Posterior vena cava (tissue), 2 donors: ENCODE measurements at regions of chr7 and their contacts with region 1.

Region 1: GRCh38 chr7:100556541-100556940 is 17.2 kb downstream of the SAP25 start:
- DNase-seq: no peak

Region 2: DNA sequence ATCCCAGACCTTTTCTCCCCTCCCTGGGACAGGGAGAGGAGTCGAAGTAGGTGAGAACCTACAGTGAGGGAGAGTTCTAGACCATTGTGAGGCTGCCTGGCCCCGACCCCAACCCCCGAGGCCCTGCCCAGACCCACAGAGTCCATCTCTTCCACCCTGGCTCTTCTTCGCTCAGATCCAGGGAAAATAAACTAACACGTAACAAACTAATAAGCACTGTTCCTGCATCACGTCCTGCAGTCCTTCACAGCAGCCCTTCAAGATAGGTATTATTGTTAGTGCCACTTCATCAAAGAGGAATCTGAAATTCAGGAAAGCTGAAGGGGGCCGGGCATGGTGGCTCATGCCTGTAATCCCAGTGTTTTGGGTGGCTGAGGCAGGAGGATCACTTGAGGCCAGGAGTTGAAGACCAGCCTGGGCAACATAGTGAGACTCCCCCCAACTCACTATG is 92.3 kb before region 1 on chr7 and contains the start of gene SPACDR:
- intact Hi-C with region 1: loop called (anchors 5 kb)
- DNase-seq: no peak
- total RNA-seq, gene SPACDR: 0.62 TPM in 1 of 2 donors, not detected in the other

Region 3: GRCh38 chr7:101990811-101991418 is 1434.4 kb after region 1 on chr7:
- intact Hi-C with region 1: no loop called
- DNase-seq: no peak